HepG2 (cell line): ENCODE measurements at regions of chr13 and their contacts with region 1.

Region 1: DNA sequence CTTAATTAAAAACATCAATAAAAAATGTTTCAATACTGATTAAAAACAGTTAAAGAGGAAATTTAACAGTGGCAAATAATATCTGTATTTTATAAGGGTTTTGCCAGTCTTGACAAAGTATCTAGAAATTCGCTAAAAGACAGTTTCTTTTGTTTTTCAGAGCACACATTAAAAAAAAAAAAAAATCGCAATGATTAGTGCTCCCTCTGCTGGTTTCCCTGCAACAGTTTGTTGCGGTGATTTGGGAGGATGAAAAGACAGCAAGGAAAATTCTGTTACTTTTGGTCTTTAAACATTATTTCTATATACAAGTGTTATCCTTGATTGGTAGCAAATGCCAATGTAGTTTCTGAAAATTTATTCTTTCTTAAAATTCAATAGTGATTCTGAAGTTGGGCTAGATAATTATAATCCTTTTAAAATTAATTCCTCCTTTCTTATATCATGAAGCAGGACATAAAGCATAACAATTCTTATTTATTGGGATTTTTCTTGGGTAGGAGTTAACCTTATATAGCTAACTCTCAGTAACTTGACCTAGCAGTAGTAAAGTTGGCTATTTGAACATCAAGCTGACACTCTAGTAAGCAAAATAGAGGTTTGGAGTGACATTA is 23.1 kb upstream of the SPRY2 start:
- DNase-seq: peak; percentile 18
- ATAC-seq: no peak
- H3K4me3 ChIP-seq: peak overlapping the region in 1 of 3 experiments; percentile 54; a peak in 2 of 6 replicates
- H3K27ac ChIP-seq: no peak overlapping the region
- H3K4me1 ChIP-seq: peaks cover 47% of the 10 kb centered on the region
- H3K27me3 ChIP-seq: no peaks in the 10 kb centered on the region
- CTCF ChIP-seq: peak; percentile 64
- EP300 ChIP-seq: no peak
- POLR2A ChIP-seq: no peak
- RAD21 ChIP-seq: no peak

Region 2: DNA sequence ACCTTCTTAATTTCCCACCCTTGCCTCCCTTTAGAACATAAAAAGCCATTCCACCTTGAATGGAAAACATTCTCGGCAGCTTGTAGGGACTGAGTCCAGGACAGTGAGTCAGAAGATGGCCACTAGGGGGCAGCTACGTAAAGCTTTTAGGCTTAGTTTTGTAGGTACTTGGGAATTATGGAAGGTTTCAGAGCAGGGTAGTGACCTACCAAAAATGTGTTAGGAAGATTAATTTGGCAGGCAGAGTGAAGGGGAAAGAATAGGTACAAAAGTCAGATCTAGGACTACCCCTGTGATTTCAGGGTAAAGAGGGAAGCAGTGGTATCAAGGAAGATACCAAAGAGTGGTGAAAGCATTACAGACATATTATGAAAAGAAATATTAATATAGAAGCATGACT is 684.7 kb before region 1 on chr13:
- CTCF ChIA-PET with region 1: interaction called, 15 read pairs
- POLR2A ChIA-PET with region 1: no interaction called
- in situ Hi-C with region 1: loop called (anchors 5 kb)
- intact Hi-C with region 1: loop called (anchors 1 kb)
- DNase-seq: peak; percentile 53
- ATAC-seq: peak; percentile 91
- H3K4me3 ChIP-seq: no peak overlapping the region
- H3K27ac ChIP-seq: no peak overlapping the region
- H3K4me1 ChIP-seq: no peaks in the 10 kb centered on the region
- H3K27me3 ChIP-seq: no peaks in the 10 kb centered on the region
- CTCF ChIP-seq: peak; percentile 79
- EP300 ChIP-seq: no peak
- POLR2A ChIP-seq: no peak
- RAD21 ChIP-seq: no peak

Region 3: GRCh38 chr13:79775830-79776229 is 588.2 kb before region 1 on chr13:
- CTCF ChIA-PET with region 1: no interaction called
- POLR2A ChIA-PET with region 1: no interaction called
- in situ Hi-C with region 1: loop called (anchors 25 kb)
- intact Hi-C with region 1: loop called (anchors 1 kb)
- DNase-seq: peak; percentile 38
- ATAC-seq: peak; percentile 66; the same call in 2 of the 3 replicates
- H3K4me3 ChIP-seq: no peak overlapping the region
- H3K27ac ChIP-seq: no peak overlapping the region
- H3K4me1 ChIP-seq: no peaks in the 10 kb centered on the region
- H3K27me3 ChIP-seq: no peaks in the 10 kb centered on the region
- CTCF ChIP-seq: peak; percentile 59
- EP300 ChIP-seq: no peak
- POLR2A ChIP-seq: no peak
- RAD21 ChIP-seq: no peak

Region 4: DNA sequence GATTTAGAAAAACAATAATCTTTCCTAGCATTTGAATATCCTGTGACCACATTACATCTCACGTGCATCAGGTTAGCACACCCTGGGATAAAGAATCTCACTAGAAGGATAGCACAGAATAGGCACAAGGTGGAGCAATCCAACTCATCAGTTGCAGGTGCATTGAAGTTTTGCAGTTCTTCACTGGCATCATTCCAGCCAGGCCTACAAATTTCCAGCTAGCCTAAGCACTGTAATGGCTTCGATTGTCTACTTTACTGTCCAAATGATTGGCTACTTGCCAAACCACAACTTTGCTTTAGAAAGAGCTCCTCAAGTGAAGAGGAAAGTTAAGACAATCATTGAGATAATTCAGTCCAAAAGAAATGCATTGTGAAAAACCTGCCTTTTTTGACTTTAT is 112.6 kb before region 1 on chr13:
- CTCF ChIA-PET with region 1: no interaction called
- POLR2A ChIA-PET with region 1: no interaction called
- in situ Hi-C with region 1: no loop called
- intact Hi-C with region 1: loop called (anchors 2 kb)
- DNase-seq: no peak
- ATAC-seq: peak; percentile 34; the same call in 1 of the 3 replicates
- H3K4me3 ChIP-seq: no peak overlapping the region
- H3K27ac ChIP-seq: no peak overlapping the region
- H3K4me1 ChIP-seq: no peaks in the 10 kb centered on the region
- H3K27me3 ChIP-seq: no peaks in the 10 kb centered on the region
- CTCF ChIP-seq: peak; percentile 27; the same call in 1 of the 2 replicates
- EP300 ChIP-seq: no peak
- POLR2A ChIP-seq: no peak
- RAD21 ChIP-seq: no peak